ENCODE measurements at regions of chr6 and their contacts with region 1.

Region 1: GRCh38 chr6:106629103-106629858 is at the starts of genes QRSL1 and RTN4IP1:
- DNase-seq: peak; percentile 92
- H3K4me3 Mint-ChIP-seq: peak within 1 kb of the TSS; percentile 98
- H3K27ac Mint-ChIP-seq: peak within 1 kb of the TSS; percentile 98
- H3K4me1 Mint-ChIP-seq: peaks cover 32% of the 10 kb centered on the region
- H3K27me3 Mint-ChIP-seq: no peaks in the 10 kb centered on the region
- total RNA-seq, gene QRSL1: 19.6 to 21.6 TPM
- total RNA-seq, gene RTN4IP1: 5.5 to 6.0 TPM

Region 2: GRCh38 chr6:106325336-106326178 is 303.7 kb before region 1 on chr6 and contains the start of gene ATG5:
- CTCF ChIA-PET with region 1: no interaction called
- intact Hi-C with region 1: loop called (anchors 1 kb)
- DNase-seq: peak; percentile 100
- H3K4me3 Mint-ChIP-seq: peak within 1 kb of the TSS; percentile 99
- H3K27ac Mint-ChIP-seq: peak within 1 kb of the TSS; percentile 89
- H3K4me1 Mint-ChIP-seq: peaks cover 39% of the 10 kb centered on the region
- H3K27me3 Mint-ChIP-seq: no peaks in the 10 kb centered on the region
- total RNA-seq, gene ATG5: 20.2 to 20.7 TPM

Region 3: GRCh38 chr6:106534564-106534982 is 94.7 kb before region 1 on chr6:
- CTCF ChIA-PET with region 1: no interaction called
- intact Hi-C with region 1: loop called (anchors 1 kb)
- DNase-seq: peak; percentile 85
- H3K4me3 Mint-ChIP-seq: no peak overlapping the region
- H3K27ac Mint-ChIP-seq: peak overlapping the region; percentile 81
- H3K4me1 Mint-ChIP-seq: peaks cover 77% of the 10 kb centered on the region
- H3K27me3 Mint-ChIP-seq: no peaks in the 10 kb centered on the region

Region 4: GRCh38 chr6:106617302-106617701 is 12.0 kb before region 1 on chr6:
- CTCF ChIA-PET with region 1: no interaction called
- intact Hi-C with region 1: no loop called
- DNase-seq: no peak
- H3K4me3 Mint-ChIP-seq: no peak overlapping the region
- H3K27ac Mint-ChIP-seq: no peak overlapping the region
- H3K4me1 Mint-ChIP-seq: peaks cover 9% of the 10 kb centered on the region
- H3K27me3 Mint-ChIP-seq: no peaks in the 10 kb centered on the region

Region 5: DNA sequence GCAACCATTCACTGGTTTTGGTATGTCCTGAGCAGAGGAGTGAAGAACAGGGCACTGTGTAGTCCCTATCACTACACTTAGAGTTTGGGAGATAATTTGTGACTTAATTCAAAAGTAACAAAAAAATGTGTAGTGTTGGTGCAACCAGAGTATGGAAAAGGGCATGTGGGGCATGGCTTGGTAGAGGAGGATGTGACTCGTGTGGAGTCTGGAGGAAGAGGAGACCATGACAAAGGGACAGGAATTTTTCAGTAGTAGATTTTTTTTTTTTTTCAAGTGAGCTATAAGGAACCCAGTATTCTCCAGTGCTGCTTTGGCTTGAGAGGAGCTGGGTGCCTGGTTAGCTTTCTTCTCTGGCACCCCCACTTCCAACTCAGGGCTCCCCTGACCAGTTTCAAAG is 403.8 kb after region 1 on chr6:
- CTCF ChIA-PET with region 1: no interaction called
- intact Hi-C with region 1: loop called (anchors 1 kb)
- DNase-seq: no peak
- H3K4me3 Mint-ChIP-seq: no peak overlapping the region
- H3K27ac Mint-ChIP-seq: no peak overlapping the region
- H3K4me1 Mint-ChIP-seq: peaks cover 42% of the 10 kb centered on the region
- H3K27me3 Mint-ChIP-seq: no peaks in the 10 kb centered on the region